ENCODE measurements at regions of chr3 and their contacts with region 1.

Region 1: DNA sequence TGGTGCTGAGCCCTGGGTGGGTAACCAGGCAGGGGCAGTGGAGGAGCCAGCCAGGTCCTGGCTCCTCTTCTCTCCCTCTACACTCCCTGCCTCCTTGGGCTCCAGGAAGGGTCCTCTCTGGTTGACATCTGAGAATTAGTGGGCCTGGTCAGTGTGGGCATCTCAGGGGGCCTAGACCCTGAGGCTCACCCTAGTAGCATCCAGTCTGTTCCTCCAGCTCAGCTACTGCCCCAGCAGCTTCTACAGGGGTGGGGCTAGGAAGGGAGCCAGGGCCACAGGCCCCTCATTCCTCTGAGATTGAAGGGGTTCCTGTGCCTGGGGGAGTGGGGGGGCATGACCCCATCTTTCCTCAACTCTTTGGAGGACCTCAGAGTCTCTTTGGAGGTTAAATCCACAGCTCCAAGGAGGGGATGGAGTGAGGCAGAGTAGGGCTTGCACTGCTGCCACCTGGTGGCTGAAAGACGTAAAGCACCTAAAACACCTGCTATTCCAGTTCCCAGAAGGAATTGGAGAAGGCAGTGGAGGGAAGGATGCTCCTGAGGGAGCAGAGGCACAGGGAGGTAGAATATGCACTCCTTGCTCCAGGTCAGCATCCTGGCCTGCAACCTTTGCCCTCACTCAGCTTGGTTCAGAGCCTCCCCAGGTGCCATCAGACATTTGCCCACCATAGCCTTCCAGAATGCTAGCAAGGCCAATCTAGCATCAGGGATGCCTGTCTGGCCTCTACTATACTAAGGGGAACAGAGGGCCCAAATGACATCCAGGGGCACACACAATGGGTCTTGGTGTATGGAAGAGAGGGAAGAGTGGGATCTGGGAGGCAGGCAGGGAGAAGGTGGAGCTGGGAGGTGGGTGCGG is 25.1 kb downstream of the C3orf18 start:
- DNase-seq: peak; percentile 81
- H3K4me3 ChIP-seq: no peak overlapping the region
- H3K27ac ChIP-seq: no peak overlapping the region
- H3K4me1 ChIP-seq: no peaks in the 10 kb centered on the region
- H3K27me3 ChIP-seq: peaks cover 0 to 33% (median 0%) of the 10 kb centered on the region in 7 donors
- CTCF ChIP-seq: peak; percentile 50 to 93 (median 86)
- POLR2A ChIP-seq: no peak

Region 2: GRCh38 chr3:50347194-50347918 is 195.1 kb before region 1 on chr3:
- intact Hi-C with region 1: loop called (anchors 2 kb)
- DNase-seq: peak; percentile 89
- H3K4me3 ChIP-seq: no peak overlapping the region
- H3K27ac ChIP-seq: peak overlapping the region in 5 of 8 donors; percentile 8 to 38 (median 18)
- H3K4me1 ChIP-seq: peaks cover 20 to 91% (median 66%) of the 10 kb centered on the region in 6 donors
- H3K27me3 ChIP-seq: no peaks in the 10 kb centered on the region
- CTCF ChIP-seq: peak; percentile 26 to 71 (median 56)
- POLR2A ChIP-seq: no peak

Region 3: DNA sequence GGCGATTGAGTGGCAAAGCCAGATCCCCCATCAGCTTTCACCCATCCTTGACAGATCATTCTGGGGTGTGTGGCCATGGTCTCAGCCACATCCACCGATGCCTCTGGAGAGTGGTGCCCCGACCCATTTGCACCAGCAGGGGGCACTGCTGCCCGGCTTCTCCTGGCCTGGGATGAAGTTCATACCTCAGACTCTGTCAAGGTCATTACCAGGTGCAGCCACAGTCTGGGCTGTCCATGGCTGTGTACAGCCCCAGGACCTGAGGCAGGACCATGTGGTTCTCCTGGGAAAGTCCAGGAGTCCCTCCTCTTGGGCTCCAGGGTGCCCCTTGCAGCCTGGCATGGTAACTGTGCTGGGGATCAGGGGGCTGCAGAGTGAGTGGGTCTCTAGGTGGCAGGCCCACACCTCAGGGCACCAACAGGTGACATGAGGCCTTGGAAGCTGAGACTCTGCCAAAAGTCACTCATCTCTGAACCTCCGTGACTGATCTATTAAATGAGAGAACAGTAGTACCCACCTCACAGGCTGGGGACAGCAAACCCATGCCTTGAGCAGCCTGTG is 106.2 kb before region 1 on chr3:
- intact Hi-C with region 1: loop called (anchors 5 kb)
- DNase-seq: peak; percentile 91
- H3K4me3 ChIP-seq: no peak overlapping the region
- H3K27ac ChIP-seq: no peak overlapping the region
- H3K4me1 ChIP-seq: no peaks in the 10 kb centered on the region
- H3K27me3 ChIP-seq: peaks cover 0 to 6% (median 0%) of the 10 kb centered on the region in 7 donors
- CTCF ChIP-seq: peak; percentile 79 to 96 (median 87)
- POLR2A ChIP-seq: no peak

Region 4: GRCh38 chr3:51176923-51177322 is 634.5 kb after region 1 on chr3:
- intact Hi-C with region 1: no loop called
- DNase-seq: no peak
- H3K4me3 ChIP-seq: no peak overlapping the region
- H3K27ac ChIP-seq: no peak overlapping the region
- H3K4me1 ChIP-seq: no peaks in the 10 kb centered on the region
- H3K27me3 ChIP-seq: no peaks in the 10 kb centered on the region
- CTCF ChIP-seq: no peak
- POLR2A ChIP-seq: no peak